GM12878 (cell line): ENCODE measurements at regions of chr22 and their contacts with region 1.

Region 1: DNA sequence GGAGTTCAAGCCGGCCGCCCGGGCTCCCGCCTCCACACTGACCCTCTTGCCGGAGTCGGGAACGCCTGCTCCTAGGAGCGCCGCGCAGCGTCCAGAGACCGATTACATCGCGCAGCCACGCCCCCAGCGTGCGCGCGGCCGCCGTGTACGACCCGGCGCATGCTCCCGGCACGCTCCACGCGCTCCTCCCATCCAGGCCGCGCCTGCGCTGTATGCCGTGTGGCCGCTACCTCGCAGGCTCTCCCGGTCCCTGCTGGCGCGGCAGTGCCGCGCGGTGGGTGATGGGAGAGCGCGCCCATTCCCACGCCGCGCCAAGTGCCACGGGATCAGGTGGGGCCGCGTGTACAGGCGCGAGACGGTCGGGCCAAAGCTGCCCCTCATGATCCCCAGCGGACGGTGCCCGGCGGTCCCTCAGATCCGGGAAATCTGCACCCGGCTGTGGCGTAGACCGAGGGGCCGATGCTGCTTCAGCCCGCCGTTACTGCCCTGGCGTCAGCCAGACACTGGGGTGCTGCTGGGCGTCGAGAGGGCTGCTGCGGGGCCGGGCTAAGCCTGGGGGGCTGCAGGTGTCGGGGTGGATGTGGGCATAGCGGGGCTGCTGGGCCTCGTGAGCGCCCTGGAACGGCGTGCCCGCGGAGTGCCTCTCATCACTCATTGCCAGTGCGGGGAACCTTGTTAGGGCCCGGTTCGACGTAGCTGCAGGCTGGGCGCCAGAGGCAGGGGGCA is at the starts of genes GNB1L and RTL10:
- DNase-seq: peak; percentile 90
- ATAC-seq: peak; percentile 93
- H3K4me3 ChIP-seq: peak within 1 kb of the TSS; percentile 93
- H3K27ac ChIP-seq: peak within 1 kb of the TSS; percentile 97
- H3K4me1 ChIP-seq: peaks cover 9% of the 10 kb centered on the region
- H3K27me3 ChIP-seq: no peaks in the 10 kb centered on the region
- CTCF ChIP-seq: peak in 1 of 3 experiments; percentile 10; a peak in 1 of 6 replicates
- EP300 ChIP-seq: no peak
- POLR2A ChIP-seq: peak; percentile 96
- RAD21 ChIP-seq: no peak
- polyA plus RNA-seq, gene GNB1L: 0.21 to 0.99 TPM
- polyA plus RNA-seq, gene RTL10: 5.3 to 7.3 TPM

Region 2: DNA sequence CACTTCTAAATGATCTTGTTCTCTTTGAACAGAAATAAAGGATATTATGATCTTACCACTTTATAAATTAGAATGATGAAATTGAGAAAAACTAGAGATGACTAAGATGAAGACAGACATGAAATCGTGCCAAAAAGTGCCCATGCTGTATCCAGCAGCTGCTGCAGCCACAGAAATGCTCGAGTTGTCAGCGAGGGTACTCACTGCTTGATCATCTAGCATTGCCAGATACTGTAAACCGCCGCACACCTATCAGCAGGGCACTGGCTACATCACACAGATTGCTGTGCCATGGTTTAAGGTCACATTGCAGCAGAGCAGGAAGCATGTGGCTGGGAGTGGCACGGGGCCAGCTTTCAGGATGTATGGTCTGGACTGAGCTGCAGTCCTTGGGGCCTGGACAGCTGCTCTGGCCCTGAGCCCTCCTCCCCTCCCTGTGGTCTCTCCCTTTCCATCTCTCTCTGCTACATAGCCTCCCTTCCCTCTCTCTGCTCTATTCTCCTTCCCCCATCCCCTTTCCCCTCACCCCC is 191.6 kb before region 1 on chr22:
- CTCF ChIA-PET with region 1: no interaction called
- POLR2A ChIA-PET with region 1: no interaction called
- RAD21 ChIA-PET with region 1: no interaction called
- SMC1A ChIA-PET with region 1: no interaction called
- in situ Hi-C with region 1: no loop called
- intact Hi-C with region 1: no loop called
- DNase-seq: no peak
- ATAC-seq: peak; percentile 46; the same call in 2 of the 3 replicates
- H3K4me3 ChIP-seq: no peak overlapping the region
- H3K27ac ChIP-seq: no peak overlapping the region
- H3K4me1 ChIP-seq: no peaks in the 10 kb centered on the region
- H3K27me3 ChIP-seq: no peaks in the 10 kb centered on the region; a peak in 2 of 4 replicates
- CTCF ChIP-seq: no peak
- EP300 ChIP-seq: no peak
- POLR2A ChIP-seq: no peak
- RAD21 ChIP-seq: no peak

Region 3: DNA sequence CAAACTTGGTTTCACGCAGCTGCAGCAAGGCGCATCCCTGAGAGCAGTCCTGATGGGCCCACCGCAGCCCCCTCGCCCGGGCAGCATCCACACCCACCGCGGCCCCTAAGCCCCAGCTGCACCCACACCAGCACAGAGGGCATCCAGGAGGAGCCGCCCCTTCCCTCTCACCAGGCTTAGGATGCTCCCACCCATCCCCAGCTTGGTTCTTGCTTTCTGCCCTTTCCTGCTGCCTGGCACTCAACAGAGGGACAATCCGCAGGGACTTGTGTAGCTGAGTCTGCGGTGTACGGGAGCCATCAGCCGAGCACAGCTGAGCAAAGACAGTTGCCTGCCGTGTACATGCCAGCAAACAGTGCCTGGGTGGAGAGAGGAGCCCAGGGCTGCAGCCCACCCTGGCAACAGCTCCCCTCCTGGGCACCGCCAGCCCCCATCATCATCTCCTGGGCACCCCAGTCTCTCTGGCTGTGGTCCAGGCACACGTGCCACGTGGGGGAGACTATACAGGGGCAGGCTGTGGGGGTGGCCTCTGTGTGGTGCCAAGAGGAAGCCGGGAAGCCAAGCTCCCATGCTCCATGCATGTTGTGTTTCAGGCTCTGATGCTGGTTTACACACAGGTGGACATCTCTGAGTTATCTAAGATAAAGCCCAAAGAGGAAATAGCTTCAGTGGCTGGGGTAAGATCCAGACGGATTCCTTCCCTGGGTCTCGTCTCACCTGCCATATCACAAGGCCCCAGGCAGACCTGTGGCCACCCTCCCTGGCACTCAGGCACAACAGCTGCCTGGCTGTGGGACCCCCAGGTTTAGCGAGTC is 35.8 kb after region 1 on chr22:
- CTCF ChIA-PET with region 1: no interaction called
- POLR2A ChIA-PET with region 1: no interaction called
- RAD21 ChIA-PET with region 1: no interaction called
- SMC1A ChIA-PET with region 1: no interaction called
- in situ Hi-C with region 1: no loop called
- intact Hi-C with region 1: no loop called
- DNase-seq: no peak
- ATAC-seq: no peak; the same call in 2 of the 3 replicates
- H3K4me3 ChIP-seq: no peak overlapping the region
- H3K27ac ChIP-seq: peak overlapping the region; percentile 9; the same call in 1 of the 2 replicates
- H3K4me1 ChIP-seq: peaks cover 20% of the 10 kb centered on the region
- H3K27me3 ChIP-seq: no peaks in the 10 kb centered on the region
- CTCF ChIP-seq: no peak
- EP300 ChIP-seq: no peak
- POLR2A ChIP-seq: no peak; the same call in 1 of the 2 replicates
- RAD21 ChIP-seq: no peak

Region 4: GRCh38 chr22:19941365-19942082 is 86.6 kb after region 1 on chr22 and contains the starts of genes COMT and TXNRD2:
- CTCF ChIA-PET with region 1: no interaction called
- POLR2A ChIA-PET with region 1: interaction called, 4 read pairs
- RAD21 ChIA-PET with region 1: interaction called, 7 read pairs
- SMC1A ChIA-PET with region 1: no interaction called
- in situ Hi-C with region 1: no loop called
- intact Hi-C with region 1: loop called (anchors 5 kb)
- DNase-seq: no peak
- ATAC-seq: peak; percentile 91
- H3K4me3 ChIP-seq: peak within 1 kb of the TSS; percentile 94
- H3K27ac ChIP-seq: peak within 1 kb of the TSS; percentile 91
- H3K4me1 ChIP-seq: peaks cover 15% of the 10 kb centered on the region; the same call in 1 of the 2 replicates
- H3K27me3 ChIP-seq: no peaks in the 10 kb centered on the region
- CTCF ChIP-seq: no peak
- EP300 ChIP-seq: no peak
- POLR2A ChIP-seq: peak; percentile 93
- RAD21 ChIP-seq: no peak
- polyA plus RNA-seq, gene COMT: 4.5 to 16.1 TPM
- polyA plus RNA-seq, gene TXNRD2: 1.6 to 1.9 TPM

Region 5: DNA sequence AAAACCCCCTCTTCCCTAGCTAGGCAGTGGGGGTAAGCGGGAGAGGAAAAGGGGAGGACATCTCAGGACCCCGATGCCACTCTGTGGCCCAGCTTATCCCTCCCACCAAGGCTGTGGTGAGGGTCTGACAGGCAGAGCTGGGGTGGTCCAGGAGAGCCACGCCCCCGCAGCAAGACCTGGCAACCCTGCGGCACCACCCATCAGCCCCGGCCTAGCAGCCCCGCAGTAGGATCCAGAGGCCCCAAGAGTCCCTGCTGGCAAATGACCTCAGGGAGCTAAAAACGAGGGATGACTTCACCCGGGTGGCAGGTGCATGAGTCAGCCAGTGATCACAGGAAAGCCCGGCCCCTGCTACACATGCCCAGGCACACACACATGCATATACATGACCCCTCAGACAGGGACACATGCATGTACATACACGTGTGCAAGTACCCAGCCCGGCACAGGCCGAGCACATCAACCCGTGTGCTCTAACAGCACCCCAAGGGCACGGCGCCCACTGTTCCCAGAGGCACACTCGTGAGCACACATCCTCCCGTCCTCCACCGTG is 129.3 kb after region 1 on chr22:
- CTCF ChIA-PET with region 1: no interaction called
- POLR2A ChIA-PET with region 1: no interaction called
- RAD21 ChIA-PET with region 1: no interaction called
- SMC1A ChIA-PET with region 1: no interaction called
- in situ Hi-C with region 1: no loop called
- intact Hi-C with region 1: no loop called
- DNase-seq: no peak
- ATAC-seq: peak; percentile 33
- H3K4me3 ChIP-seq: no peak overlapping the region
- H3K27ac ChIP-seq: no peak overlapping the region
- H3K4me1 ChIP-seq: no peaks in the 10 kb centered on the region
- H3K27me3 ChIP-seq: 0 out of 4 replicates have a peak, but pooled peaks cover 0 to 2% of the 10 kb centered on the region in 2 experiments
- CTCF ChIP-seq: no peak
- EP300 ChIP-seq: no peak
- POLR2A ChIP-seq: no peak
- RAD21 ChIP-seq: no peak